A549 (cell line): ENCODE measurements at regions of chr20 and their contacts with region 1.

Region 1: DNA sequence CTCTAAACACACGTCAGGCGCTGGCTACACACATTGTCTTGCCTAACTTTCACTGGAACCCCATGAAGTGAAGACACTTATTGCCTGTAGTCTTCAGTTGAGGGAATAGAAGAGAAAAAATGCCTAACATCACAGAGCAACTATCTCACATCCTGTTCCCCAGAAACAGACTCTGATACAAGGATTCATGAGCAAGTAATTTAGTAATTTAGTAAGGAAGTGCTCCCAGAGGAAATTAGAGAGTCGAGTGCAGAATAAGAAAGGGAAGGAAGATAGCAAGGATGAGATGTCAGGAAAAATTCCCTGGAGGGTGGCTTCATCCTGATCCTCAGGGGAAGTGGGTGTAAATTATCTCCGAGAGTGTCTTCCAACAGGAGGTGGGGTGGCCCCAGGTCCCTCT is 104.0 kb downstream of the FOXA2 start:
- DNase-seq: no peak
- ATAC-seq: no peak
- H3K4me3 ChIP-seq: no peak overlapping the region
- H3K27ac ChIP-seq: 0 out of 6 replicates have a peak overlapping the region, but pooled peaks of 1 of the 2 experiments have one; percentile 6
- H3K4me1 ChIP-seq: no peaks in the 10 kb centered on the region
- CTCF ChIP-seq: no peak
- EP300 ChIP-seq: no peak
- POLR2A ChIP-seq: no peak
- RAD21 ChIP-seq: no peak

Region 2: DNA sequence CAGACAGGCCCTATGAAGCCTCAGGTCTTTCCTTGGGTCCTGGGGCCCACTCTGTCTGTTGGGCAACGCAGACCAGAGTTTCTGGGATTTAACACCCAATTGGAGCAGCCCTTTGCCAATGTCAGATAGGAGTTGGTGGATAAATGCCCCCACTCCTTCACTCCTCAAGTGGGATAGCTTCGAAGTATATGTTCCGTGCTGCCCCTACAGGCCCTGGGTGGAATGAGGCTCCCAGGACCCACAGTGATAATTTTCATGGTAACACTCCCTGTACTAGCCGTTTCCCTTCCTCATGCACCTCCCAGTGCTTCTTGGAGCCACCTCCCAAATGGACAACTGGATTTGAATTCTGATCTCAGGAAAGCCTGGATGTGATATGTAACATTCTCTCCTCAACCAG is 41.4 kb before region 1 on chr20:
- CTCF ChIA-PET with region 1: no interaction called
- POLR2A ChIA-PET with region 1: no interaction called
- DNase-seq: peak in 1 of 2 experiments; percentile 51
- ATAC-seq: peak; percentile 73 to 95
- H3K4me3 ChIP-seq: no peak overlapping the region
- H3K27ac ChIP-seq: peak overlapping the region in 1 of 2 experiments; percentile 39; a peak in 2 of 6 replicates
- H3K4me1 ChIP-seq: peaks cover 16% of the 10 kb centered on the region
- CTCF ChIP-seq: no peak
- EP300 ChIP-seq: no peak
- POLR2A ChIP-seq: no peak
- RAD21 ChIP-seq: peak in 1 of 2 experiments; percentile 28; a peak in 1 of 5 replicates

Region 3: DNA sequence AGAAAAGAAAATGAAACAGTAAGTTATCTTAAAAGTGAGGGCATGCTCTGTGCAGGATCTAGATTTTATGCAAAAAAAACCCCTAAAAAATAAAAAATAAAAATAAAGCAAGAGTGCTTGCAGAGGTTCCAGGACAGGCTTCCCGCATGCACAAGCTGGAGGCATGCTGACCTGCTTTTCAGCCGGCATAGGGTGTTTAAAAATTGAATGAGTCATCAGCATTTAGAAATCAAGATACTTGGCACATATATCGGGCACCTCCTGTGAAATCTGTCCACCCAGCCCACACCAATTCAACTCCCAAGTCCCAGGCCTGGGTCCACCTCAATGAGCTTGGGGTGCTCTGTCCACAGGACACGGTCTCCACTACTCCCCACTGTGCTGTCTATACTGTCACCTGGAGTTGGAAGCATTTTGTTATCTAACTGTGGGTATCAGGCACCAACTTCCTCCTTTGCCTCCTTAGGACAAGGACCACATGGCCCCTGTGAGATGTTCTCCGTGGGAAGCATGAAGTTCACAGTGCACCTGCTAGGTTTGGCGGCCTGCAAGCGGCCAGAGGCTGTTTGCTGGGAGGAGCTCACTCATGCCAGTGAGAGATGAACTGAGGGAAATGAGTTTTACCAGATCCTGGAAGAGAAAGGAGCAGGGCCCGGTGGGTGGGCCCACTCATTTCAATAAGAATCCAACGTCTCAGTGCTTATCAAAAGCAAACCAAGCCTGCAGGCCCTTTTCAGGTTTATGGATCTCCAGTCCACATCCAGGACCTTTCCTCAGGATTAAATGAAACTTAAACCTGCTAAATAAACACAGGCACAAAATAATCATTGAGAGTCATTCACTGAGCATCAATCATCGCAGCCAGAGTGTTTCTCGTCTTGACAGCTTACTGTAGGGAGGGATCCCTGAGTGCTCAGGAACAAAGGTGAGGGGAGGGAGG is 17.1 kb before region 1 on chr20:
- CTCF ChIA-PET with region 1: interaction called, 10 read pairs
- POLR2A ChIA-PET with region 1: no interaction called
- DNase-seq: peak in 1 of 2 experiments; percentile 48
- ATAC-seq: peak; percentile 60 to 71
- H3K4me3 ChIP-seq: no peak overlapping the region
- H3K27ac ChIP-seq: peak overlapping the region; percentile 78 to 86
- H3K4me1 ChIP-seq: peaks cover 51% of the 10 kb centered on the region
- CTCF ChIP-seq: no peak
- EP300 ChIP-seq: no peak; a peak in 1 of 5 replicates
- POLR2A ChIP-seq: no peak
- RAD21 ChIP-seq: no peak

Region 4: GRCh38 chr20:22523499-22524392 is 43.4 kb after region 1 on chr20:
- CTCF ChIA-PET with region 1: no interaction called
- POLR2A ChIA-PET with region 1: no interaction called
- DNase-seq: peak in 1 of 2 experiments; percentile 28
- ATAC-seq: peak; percentile 54 to 55; a peak in 4 of 6 replicates
- H3K4me3 ChIP-seq: no peak overlapping the region
- H3K27ac ChIP-seq: peak overlapping the region; percentile 14 to 65; a peak in 3 of 6 replicates
- H3K4me1 ChIP-seq: peaks cover 14% of the 10 kb centered on the region
- CTCF ChIP-seq: no peak
- EP300 ChIP-seq: no peak
- POLR2A ChIP-seq: no peak
- RAD21 ChIP-seq: no peak